ENCODE measurements at regions of chr9 and their contacts with region 1.

Region 1: DNA sequence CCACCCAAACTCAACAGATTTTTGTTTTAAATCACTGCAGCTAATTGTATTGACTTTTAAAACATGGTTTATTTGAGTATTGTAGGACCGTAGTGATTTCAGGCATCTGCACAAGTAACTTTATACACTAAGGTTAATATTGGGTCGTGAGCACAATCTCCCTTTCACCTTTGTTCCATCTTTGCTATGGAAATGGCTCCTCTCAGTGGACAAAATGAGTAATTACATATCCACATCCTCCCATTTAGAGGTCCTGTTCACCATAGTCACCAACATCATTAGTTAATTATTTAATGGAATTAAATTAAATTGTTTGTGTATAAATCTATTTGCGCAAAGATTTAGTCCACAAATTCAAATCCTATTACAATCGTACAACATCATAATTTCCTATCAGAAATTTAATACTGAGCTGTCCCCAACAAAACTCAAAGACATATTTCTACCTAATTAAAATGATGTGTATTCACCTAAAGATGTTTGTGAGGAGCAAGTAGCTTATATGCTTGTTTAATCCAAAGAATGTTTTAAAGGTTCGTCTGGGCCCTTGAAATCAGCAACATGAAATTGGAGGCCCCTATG is 173.0 kb upstream of the DAPK1 start:
- DNase-seq: peak; percentile 44
- ATAC-seq: peak; percentile 83
- H3K4me3 ChIP-seq: no peak overlapping the region
- H3K27ac ChIP-seq: no peak overlapping the region
- H3K4me1 ChIP-seq: no peaks in the 10 kb centered on the region
- H3K27me3 ChIP-seq: peaks cover 5% of the 10 kb centered on the region; the same call in 1 of the 2 replicates
- CTCF ChIP-seq: peak; percentile 45 to 66 (median 59); a peak in 5 of 6 replicates
- POLR2A ChIP-seq: no peak
- RAD21 ChIP-seq: peak; percentile 87

Region 2: DNA sequence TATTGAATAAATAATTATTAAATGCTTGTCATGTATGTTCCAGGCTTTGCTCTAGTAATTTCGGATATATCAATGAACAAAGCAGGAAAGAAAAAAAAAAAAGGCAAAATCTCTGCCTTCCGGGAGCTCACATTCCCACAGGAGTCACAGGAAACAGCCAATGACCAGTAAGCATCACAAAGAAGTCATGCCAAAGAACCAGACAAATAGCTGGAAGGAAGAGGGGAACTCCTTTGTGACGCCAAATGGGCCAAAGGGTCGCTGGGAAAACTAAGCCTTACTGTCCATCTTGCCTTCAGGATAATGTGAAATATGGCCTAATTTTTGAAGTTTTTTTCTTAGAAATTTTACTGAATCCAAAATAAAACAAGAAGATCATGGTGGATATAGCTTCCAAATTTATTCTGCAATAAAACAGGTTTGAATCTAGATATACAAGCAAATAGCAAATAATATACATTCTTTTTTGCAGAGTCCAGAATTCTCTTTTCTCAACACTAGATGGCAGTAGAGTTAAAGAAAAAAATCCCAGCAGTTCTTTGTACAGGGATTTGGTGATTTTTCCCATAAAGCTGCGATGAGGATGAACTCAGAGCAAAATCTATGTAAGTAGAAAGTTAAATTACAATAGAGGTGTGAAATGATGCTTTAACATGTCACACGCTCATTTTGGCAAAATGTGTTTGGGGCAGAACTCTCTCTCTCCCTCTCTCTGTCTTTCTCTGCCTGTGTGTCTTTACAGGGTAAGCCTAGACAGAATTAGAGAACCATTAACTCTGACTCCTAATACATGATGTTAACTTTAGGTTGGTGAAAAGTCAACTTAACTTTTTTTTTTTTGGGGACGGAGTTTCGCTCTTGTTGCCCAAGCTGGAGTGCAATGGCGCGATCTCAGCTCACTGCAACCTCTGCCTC is 910.5 kb before region 1 on chr9:
- CTCF ChIA-PET with region 1: interaction called, 7 read pairs
- POLR2A ChIA-PET with region 1: no interaction called
- RAD21 ChIA-PET with region 1: no interaction called
- intact Hi-C with region 1: loop called (anchors 1 kb)
- DNase-seq: no peak
- ATAC-seq: peak; percentile 69
- H3K4me3 ChIP-seq: no peak overlapping the region
- H3K27ac ChIP-seq: no peak overlapping the region
- H3K4me1 ChIP-seq: no peaks in the 10 kb centered on the region
- H3K27me3 ChIP-seq: peaks cover 8% of the 10 kb centered on the region; the same call in 1 of the 2 replicates
- CTCF ChIP-seq: peak; percentile 51 to 82 (median 56); a peak in 5 of 6 replicates
- POLR2A ChIP-seq: no peak
- RAD21 ChIP-seq: peak; percentile 74

Region 3: GRCh38 chr9:86486891-86487837 is 837.5 kb before region 1 on chr9:
- CTCF ChIA-PET with region 1: interaction called, 4 read pairs
- POLR2A ChIA-PET with region 1: no interaction called
- RAD21 ChIA-PET with region 1: no interaction called
- intact Hi-C with region 1: loop called (anchors 1 kb)
- DNase-seq: peak; percentile 31
- ATAC-seq: peak; percentile 68; the same call in 1 of the 2 replicates
- H3K4me3 ChIP-seq: no peak overlapping the region
- H3K27ac ChIP-seq: no peak overlapping the region
- H3K4me1 ChIP-seq: no peaks in the 10 kb centered on the region
- H3K27me3 ChIP-seq: peaks cover 23% of the 10 kb centered on the region
- CTCF ChIP-seq: peak; percentile 40 to 62 (median 46); a peak in 4 of 6 replicates
- POLR2A ChIP-seq: no peak
- RAD21 ChIP-seq: peak; percentile 73

Region 4: DNA sequence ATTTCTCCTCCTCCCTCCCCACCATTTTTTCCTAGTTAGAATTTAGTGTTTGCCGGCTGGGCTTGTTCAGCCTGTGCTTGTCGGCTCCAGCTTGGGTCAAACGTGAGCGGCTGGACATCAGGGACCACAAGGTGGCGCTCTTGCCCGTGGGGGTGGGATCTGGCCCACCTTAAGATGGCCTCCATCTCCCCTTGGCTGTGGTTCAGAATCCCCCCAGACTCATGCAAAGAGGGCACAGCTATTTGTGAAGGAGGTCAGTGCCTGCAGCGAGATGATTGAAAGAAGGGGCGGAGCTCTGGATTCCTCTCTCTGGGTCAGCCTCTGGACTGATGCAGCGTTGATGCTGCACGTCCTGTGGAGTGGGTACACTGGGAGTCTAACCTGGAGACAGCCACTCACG is 687.2 kb before region 1 on chr9:
- CTCF ChIA-PET with region 1: interaction called, 4 read pairs
- POLR2A ChIA-PET with region 1: no interaction called
- RAD21 ChIA-PET with region 1: no interaction called
- intact Hi-C with region 1: loop called (anchors 5 kb)
- DNase-seq: no peak
- ATAC-seq: peak; percentile 77
- H3K4me3 ChIP-seq: no peak overlapping the region
- H3K27ac ChIP-seq: no peak overlapping the region
- H3K4me1 ChIP-seq: no peaks in the 10 kb centered on the region
- H3K27me3 ChIP-seq: peaks cover 17% of the 10 kb centered on the region; the same call in 1 of the 2 replicates
- CTCF ChIP-seq: peak; percentile 35 to 88 (median 78); a peak in 5 of 6 replicates
- POLR2A ChIP-seq: no peak
- RAD21 ChIP-seq: peak; percentile 77

Region 5: GRCh38 chr9:87337335-87338082 is 12.8 kb after region 1 on chr9:
- CTCF ChIA-PET with region 1: no interaction called
- POLR2A ChIA-PET with region 1: no interaction called
- RAD21 ChIA-PET with region 1: no interaction called
- intact Hi-C with region 1: no loop called
- DNase-seq: no peak
- ATAC-seq: no peak
- H3K4me3 ChIP-seq: no peak overlapping the region
- H3K27ac ChIP-seq: no peak overlapping the region
- H3K4me1 ChIP-seq: no peaks in the 10 kb centered on the region
- H3K27me3 ChIP-seq: peaks cover 26% of the 10 kb centered on the region
- CTCF ChIP-seq: no peak
- POLR2A ChIP-seq: no peak
- RAD21 ChIP-seq: no peak

Region 6: DNA sequence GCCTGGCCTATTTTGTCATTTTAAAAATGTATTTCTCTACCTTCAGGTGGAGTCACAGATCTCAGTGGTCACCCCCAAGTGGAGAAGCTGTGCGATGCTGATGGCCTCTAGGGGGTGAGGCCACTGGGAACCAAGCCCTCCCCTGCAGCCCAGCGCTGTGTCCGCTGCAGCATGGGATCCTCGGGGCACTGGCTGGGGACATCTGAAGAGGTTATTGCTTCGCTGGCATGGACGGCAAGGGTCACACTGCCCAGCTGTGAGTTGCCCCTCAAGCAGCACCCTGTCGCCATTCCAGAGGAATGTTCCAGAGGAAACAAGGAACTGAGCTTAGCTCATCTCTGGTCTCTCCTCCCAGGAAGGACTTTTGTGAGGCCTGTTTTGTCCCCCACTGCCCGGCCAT is 1547.0 kb after region 1 on chr9:
- CTCF ChIA-PET with region 1: no interaction called
- POLR2A ChIA-PET with region 1: no interaction called
- RAD21 ChIA-PET with region 1: no interaction called
- intact Hi-C with region 1: no loop called
- DNase-seq: no peak
- ATAC-seq: no peak
- H3K4me3 ChIP-seq: no peak overlapping the region
- H3K27ac ChIP-seq: no peak overlapping the region
- H3K4me1 ChIP-seq: no peaks in the 10 kb centered on the region
- H3K27me3 ChIP-seq: no peaks in the 10 kb centered on the region; the same call in 1 of the 2 replicates
- CTCF ChIP-seq: no peak
- POLR2A ChIP-seq: no peak
- RAD21 ChIP-seq: no peak